PC-3 (cell line): ENCODE measurements at regions of chr1 and their contacts with region 1.

Region 1: DNA sequence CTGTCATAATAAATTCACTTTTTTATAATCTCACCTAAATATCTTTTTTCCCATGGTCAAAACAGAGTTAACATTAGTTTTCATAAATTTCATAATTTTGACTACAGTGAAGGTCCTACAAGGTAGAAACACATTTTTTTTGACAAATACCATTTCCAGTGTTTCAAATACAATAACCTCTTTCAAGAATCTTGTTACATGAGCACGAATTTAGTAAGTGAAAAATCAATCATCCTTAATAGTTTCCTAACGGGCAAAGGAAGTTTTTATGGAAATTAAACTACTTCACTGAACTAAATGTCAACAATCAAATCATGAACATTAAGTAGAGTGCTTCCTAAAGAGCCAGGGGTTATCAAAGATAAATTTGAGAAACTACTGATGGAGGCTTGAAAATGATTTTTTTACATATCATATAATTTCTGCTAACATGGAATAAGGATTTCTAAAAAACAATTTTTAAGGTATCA is 35.4 kb downstream of the ABL2 start:
- DNase-seq: no peak
- ATAC-seq: no peak
- H3K4me3 ChIP-seq: no peak overlapping the region
- H3K27ac ChIP-seq: no peak overlapping the region
- H3K4me1 ChIP-seq: peaks cover 8% of the 10 kb centered on the region; the same call in 1 of the 2 replicates
- H3K27me3 ChIP-seq: no peaks in the 10 kb centered on the region
- CTCF ChIP-seq: no peak

Region 2: GRCh38 chr1:179034720-179035119 is 159.4 kb before region 1 on chr1:
- CTCF ChIA-PET with region 1: no interaction called
- POLR2A ChIA-PET with region 1: interaction called, 20 read pairs
- intact Hi-C with region 1: no loop called
- DNase-seq: peak; percentile 48
- ATAC-seq: peak; percentile 34
- H3K4me3 ChIP-seq: no peak overlapping the region; the same call in 1 of the 2 replicates
- H3K27ac ChIP-seq: peak overlapping the region; percentile 55
- H3K4me1 ChIP-seq: peaks cover 76% of the 10 kb centered on the region
- H3K27me3 ChIP-seq: no peaks in the 10 kb centered on the region
- CTCF ChIP-seq: no peak

Region 3: GRCh38 chr1:179121159-179121938 is 72.8 kb before region 1 on chr1:
- CTCF ChIA-PET with region 1: interaction called, 4 read pairs
- POLR2A ChIA-PET with region 1: no interaction called
- intact Hi-C with region 1: loop called (anchors 1 kb)
- DNase-seq: peak; percentile 68
- ATAC-seq: peak; percentile 12; the same call in 1 of the 2 replicates
- H3K4me3 ChIP-seq: no peak overlapping the region
- H3K27ac ChIP-seq: 0 out of 2 replicates have a peak overlapping the region, but pooled peaks have one; percentile 27
- H3K4me1 ChIP-seq: peaks cover 23% of the 10 kb centered on the region
- H3K27me3 ChIP-seq: no peaks in the 10 kb centered on the region
- CTCF ChIP-seq: peak; percentile 73